ENCODE measurements at regions of chr12 and their contacts with region 1.

Region 1: DNA sequence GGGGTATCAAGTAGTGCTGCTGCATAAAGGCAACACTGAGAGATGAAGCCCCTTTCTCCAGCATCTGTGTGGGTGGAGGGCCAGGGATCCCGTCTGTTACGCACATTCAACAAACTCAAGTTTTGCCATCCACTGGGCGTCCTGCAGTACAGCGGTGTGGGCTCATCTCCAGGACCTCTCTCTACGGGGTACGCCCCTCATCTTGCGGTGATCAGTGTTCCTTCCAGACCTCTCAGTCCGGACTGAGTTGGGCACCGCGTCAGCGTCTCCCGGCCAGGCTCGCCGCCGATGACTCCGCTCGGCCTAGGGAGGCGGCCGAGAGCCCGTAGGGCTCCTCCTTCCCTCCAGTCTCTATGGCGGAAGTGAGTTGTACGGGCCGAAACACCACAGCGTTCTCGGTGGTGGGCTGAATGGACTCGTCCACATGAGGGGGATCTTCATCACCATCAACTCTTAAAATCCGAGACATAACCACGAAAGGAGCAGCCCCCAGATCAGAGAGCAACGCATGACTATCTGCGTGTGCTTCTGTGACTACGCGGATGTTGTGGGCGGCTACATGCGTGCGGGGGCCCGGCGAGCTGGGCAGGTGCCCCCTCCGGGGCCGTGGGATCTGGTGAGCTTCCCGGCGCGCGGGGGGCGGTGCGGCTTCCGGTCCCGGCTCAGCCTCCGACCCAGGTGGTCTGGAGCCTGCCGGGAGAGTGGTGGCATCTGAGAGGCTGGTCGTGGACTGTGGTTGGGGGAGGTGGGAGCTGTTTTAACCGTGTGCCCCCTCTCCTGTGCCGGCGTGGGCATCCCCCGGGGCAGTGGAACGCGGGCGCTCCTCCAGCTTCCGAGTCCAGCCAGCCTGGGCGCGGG is at the start of gene ATG101:
- DNase-seq: peak; percentile 91 to 96 (median 95)
- ATAC-seq: peak; percentile 97 to 98
- H3K4me3 ChIP-seq: peak within 1 kb of the TSS; percentile 83
- H3K27ac ChIP-seq: peak within 1 kb of the TSS; percentile 94
- H3K4me1 ChIP-seq: peaks cover 2% of the 10 kb centered on the region
- H3K27me3 ChIP-seq: no peaks in the 10 kb centered on the region
- total RNA-seq, gene ATG101: 24.8 to 30.2 (median 26.9) TPM

Region 2: DNA sequence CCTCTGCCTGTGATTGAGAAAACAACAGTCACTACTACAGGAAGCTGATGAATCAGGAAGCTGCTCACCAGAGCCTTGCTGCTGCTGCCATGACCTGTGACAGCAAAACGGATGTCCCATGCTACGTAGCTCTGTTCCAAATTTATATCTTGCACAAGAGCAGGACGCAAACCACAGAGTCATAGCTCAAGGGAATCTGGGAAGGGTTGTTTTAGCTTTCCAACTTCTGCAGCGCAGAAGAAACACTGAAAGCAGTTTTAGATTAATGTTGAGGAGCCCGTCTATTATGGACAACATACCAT is 183.6 kb before region 1 on chr12:
- intact Hi-C with region 1: no loop called
- DNase-seq: peak; percentile 80 to 86 (median 84)
- ATAC-seq: peak; percentile 93 to 94
- H3K4me3 ChIP-seq: no peak overlapping the region
- H3K27ac ChIP-seq: no peak overlapping the region
- H3K4me1 ChIP-seq: no peaks in the 10 kb centered on the region
- H3K27me3 ChIP-seq: no peaks in the 10 kb centered on the region

Region 3: DNA sequence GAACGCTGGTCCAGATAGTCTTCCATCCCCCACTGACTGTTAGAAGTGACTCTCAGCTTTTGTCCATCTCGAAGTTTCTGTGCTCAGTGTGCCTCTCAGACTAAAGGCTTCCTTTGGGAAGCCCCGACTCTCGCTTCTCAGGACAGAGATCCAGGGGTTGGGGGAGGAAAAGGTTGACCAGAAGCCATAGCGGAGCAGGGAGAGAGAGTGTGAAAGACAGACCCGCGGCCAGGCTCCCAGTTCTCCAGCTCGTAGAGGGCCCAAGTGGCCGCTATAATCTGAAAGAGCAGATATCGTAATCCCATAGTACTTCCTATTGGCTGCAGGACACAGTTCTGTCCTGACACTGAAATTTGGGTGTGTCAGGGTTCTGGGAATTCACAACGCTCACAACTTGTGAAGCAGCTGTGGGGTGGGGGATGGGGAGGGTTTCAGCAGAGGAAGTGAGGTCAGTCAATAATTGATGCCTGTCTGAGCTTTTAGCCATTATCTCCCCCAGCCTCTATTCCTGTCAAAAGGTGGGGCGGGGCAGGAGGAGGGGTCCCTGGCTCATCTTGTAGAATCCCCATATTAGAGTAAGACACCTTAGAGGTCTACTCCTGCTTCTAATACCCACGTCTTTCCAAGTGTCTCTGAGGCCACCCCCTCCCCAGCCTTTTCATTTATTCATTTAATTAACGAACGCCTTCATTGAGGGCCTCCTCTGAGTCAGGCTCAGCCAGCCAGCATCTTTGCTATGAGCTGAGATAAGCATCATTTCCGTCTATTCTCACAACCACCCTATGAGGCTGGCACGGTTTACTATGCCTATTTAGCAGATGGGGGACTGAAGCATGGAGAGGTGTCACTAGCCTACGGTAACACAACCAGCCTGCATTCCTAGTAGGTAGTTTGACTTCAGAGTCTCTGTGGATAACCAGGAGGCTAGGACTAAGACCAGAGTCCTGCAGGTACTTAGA is 163.8 kb before region 1 on chr12:
- intact Hi-C with region 1: loop called in 1 of 4 experiments (anchors 10 kb)
- DNase-seq: peak; percentile 89 to 96 (median 91)
- ATAC-seq: peak; percentile 87 to 91
- H3K4me3 ChIP-seq: no peak overlapping the region
- H3K27ac ChIP-seq: peak overlapping the region; percentile 95
- H3K4me1 ChIP-seq: peaks cover 17% of the 10 kb centered on the region
- H3K27me3 ChIP-seq: no peaks in the 10 kb centered on the region

Region 4: GRCh38 chr12:52014567-52015530 is 54.7 kb before region 1 on chr12:
- intact Hi-C with region 1: no loop called
- DNase-seq: peak in 1 of 3 donors; percentile 60
- ATAC-seq: no peak
- H3K4me3 ChIP-seq: no peak overlapping the region
- H3K27ac ChIP-seq: no peak overlapping the region
- H3K4me1 ChIP-seq: peaks cover 7% of the 10 kb centered on the region
- H3K27me3 ChIP-seq: no peaks in the 10 kb centered on the region

Region 5: DNA sequence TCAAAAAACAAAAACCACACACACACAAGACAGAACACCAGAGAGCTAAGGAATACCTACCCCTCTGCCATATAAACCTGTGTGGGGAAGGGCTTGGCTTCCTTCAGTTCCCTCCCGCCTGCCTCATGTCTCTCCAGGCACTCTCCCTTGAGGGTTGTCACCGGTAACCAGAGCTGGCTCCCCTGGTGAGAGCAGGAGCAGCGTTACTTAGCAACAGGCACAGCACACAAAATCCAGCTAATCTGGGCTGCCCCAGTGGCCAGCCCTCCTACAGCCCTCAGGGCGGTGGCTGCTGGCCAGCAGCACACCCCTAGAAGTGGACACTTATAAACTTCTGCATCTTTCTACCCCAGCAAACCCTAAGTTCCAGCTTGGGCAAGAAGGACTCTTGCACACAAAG is 39.9 kb before region 1 on chr12:
- intact Hi-C with region 1: loop called in 3 of 4 experiments (anchors 5 kb)
- DNase-seq: peak in 1 of 3 donors; percentile 67
- ATAC-seq: no peak
- H3K4me3 ChIP-seq: no peak overlapping the region
- H3K27ac ChIP-seq: peak overlapping the region; percentile 16
- H3K4me1 ChIP-seq: peaks cover 2% of the 10 kb centered on the region
- H3K27me3 ChIP-seq: no peaks in the 10 kb centered on the region

Measured in right cardiac atrium (tissue), 5 donors.